GM23248 (cell line): ENCODE measurements at regions of chrX and their contacts with region 1.

Region 1: GRCh38 chrX:46796574-46797191 is 37.8 kb upstream of the SLC9A7 start:
- DNase-seq: peak; percentile 72
- H3K4me3 ChIP-seq: no peak overlapping the region
- H3K27ac ChIP-seq: no peak overlapping the region
- H3K4me1 ChIP-seq: peaks cover 15% of the 10 kb centered on the region
- H3K27me3 ChIP-seq: no peaks in the 10 kb centered on the region

Region 2: DNA sequence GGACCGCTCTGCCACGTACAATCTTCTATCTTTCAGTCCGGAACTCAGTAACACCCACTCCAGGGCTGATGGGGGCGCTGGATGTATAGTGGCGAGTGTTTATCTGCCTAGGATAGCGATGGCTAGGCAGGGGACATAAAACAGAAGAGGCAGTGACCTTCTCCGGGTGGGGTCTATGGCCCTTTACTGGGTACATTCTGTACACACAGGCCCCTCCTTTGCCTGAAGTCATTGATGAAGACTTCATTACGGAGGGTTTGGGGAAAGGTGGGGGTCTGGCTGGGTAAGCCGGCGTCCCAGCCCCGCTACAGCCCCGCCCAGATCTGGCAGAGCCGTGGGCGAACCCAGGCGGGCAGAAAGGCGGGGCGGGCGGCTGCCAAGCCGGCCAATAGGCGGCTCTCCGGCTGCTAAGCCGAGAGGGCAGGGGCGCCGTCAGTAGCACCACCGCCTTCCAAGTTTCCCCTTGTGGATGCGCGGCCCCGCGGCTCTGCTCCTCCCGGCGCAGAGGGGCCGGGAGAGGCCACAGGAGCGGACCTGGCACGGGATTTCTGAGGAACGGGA is 223.3 kb before region 1 on chrX and contains the start of gene CHST7:
- in situ Hi-C with region 1: loop called (anchors 25 kb)
- DNase-seq: peak; percentile 81
- H3K4me3 ChIP-seq: peak within 1 kb of the TSS; percentile 79
- H3K27ac ChIP-seq: peak within 1 kb of the TSS; percentile 66
- H3K4me1 ChIP-seq: peaks cover 7% of the 10 kb centered on the region
- H3K27me3 ChIP-seq: no peaks in the 10 kb centered on the region
- total RNA-seq, gene CHST7: 17.5 and 27.8 TPM in 2 replicates

Region 3: GRCh38 chrX:46903458-46904242 is 107.0 kb after region 1 on chrX:
- in situ Hi-C with region 1: no loop called
- DNase-seq: peak; percentile 79
- H3K4me3 ChIP-seq: peak overlapping the region; percentile 79
- H3K27ac ChIP-seq: no peak overlapping the region
- H3K4me1 ChIP-seq: no peaks in the 10 kb centered on the region
- H3K27me3 ChIP-seq: no peaks in the 10 kb centered on the region